Pancreas (tissue), 10 donors: ENCODE measurements at regions of chr19 and their contacts with region 1.

Region 1: DNA sequence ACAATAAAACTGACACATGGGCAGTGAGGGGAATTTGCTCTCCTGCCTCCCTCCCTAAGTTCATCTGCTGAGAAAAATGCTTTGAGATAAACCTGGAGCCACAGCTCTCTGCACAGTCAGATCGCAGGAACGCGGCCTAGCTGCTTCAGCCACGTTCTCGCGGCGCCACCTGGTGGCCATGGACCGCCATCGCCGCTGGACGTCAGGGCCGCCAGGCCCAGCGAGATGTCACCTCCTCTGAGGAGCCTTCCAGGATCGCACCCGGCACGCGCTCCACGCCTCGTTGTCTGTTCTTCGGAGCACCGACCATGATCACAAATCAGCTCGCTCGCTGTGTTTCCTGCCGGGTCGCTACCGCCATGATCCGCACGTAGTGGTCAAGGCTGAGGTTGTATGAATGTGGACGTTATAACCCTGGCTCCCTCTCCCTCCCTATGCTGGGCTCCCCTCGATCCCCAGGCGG is 20.6 kb upstream of the USP29 start:
- DNase-seq: peak; percentile 8 to 81 (median 48)
- ATAC-seq: peak in 3 of 4 donors; percentile 69 to 85 (median 80)
- H3K4me3 ChIP-seq: no peak overlapping the region
- H3K27ac ChIP-seq: no peak overlapping the region
- H3K4me1 ChIP-seq: no peaks in the 10 kb centered on the region
- H3K27me3 ChIP-seq: peaks cover 0 to 5% (median 0%) of the 10 kb centered on the region in 4 donors
- CTCF ChIP-seq: peak; percentile 44 to 50 (median 46)

Region 2: GRCh38 chr19:56748378-56748777 is 350.9 kb before region 1 on chr19:
- intact Hi-C with region 1: loop called in 1 of 3 experiments (anchors 10 kb)
- DNase-seq: no peak
- ATAC-seq: peak; percentile 38 to 79 (median 70)
- H3K4me3 ChIP-seq: no peak overlapping the region
- H3K27ac ChIP-seq: no peak overlapping the region
- H3K4me1 ChIP-seq: no peaks in the 10 kb centered on the region
- H3K27me3 ChIP-seq: no peaks in the 10 kb centered on the region
- CTCF ChIP-seq: peak in 2 of 4 donors; percentile 21 to 26

Region 3: GRCh38 chr19:56995303-56995702 is 103.9 kb before region 1 on chr19:
- intact Hi-C with region 1: no loop called
- DNase-seq: no peak
- ATAC-seq: no peak
- H3K4me3 ChIP-seq: no peak overlapping the region
- H3K27ac ChIP-seq: no peak overlapping the region
- H3K4me1 ChIP-seq: no peaks in the 10 kb centered on the region
- H3K27me3 ChIP-seq: no peaks in the 10 kb centered on the region
- CTCF ChIP-seq: no peak